ENCODE measurements at regions of chr12 and their contacts with region 1.

Region 1: GRCh38 chr12:68317047-68317667 is 15.0 kb downstream of the MDM1 start:
- DNase-seq: peak in 2 of 5 donors; percentile 31 to 44
- ATAC-seq: no peak
- H3K4me3 ChIP-seq: no peak overlapping the region
- H3K27ac ChIP-seq: no peak overlapping the region
- H3K4me1 ChIP-seq: peaks cover 0 to 10% (median 0%) of the 10 kb centered on the region in 12 donors
- H3K27me3 ChIP-seq: no peaks in the 10 kb centered on the region
- CTCF ChIP-seq: peak; percentile 56 to 85 (median 72)
- POLR2A ChIP-seq: no peak

Region 2: DNA sequence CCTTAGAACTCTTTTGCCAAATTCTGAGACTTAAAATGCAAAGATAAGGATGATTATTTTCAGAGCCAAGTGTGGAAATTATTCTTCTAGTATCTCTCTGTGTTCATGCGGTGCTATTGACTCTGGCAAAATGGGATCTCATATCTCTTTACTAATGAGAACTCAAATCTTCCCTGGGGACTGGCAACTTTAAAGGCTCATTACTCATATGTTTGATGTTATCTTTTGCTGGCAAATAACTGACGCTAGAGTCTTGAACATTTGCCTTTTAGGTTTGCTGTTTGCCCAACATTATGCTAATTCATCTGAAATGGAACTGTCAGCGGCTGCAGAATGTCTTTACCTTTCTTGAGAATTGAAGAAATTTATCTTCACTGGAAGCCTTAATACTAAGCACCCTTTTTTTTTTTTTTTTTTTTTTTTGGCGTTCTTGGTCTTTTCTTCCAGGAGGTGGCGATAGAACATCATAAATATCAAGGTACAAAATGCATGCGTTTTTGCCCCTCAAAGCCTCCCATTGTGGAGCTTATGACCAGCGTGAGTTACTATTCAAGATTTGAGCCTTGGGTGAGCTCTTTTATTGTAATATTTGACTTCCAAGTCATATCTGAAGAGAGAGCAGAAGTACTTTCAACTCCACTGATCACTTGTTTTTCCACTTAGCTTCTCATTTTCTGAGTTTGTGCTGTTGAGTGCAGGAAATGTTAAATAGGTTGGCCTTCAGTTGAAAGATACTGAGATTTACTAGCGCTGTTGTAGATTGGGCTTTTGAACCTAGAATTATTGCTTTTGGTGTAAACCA is 961.4 kb before region 1 on chr12:
- intact Hi-C with region 1: loop called in 3 of 10 experiments (anchors 5 to 10 kb)
- DNase-seq: no peak
- ATAC-seq: peak in 3 of 4 donors; percentile 47 to 67 (median 60)
- H3K4me3 ChIP-seq: peak overlapping the region in 1 of 12 donors; percentile 3
- H3K27ac ChIP-seq: peak overlapping the region in 6 of 12 donors; percentile 16 to 52 (median 45)
- H3K4me1 ChIP-seq: peaks cover 0 to 58% (median 31%) of the 10 kb centered on the region in 12 donors
- H3K27me3 ChIP-seq: no peaks in the 10 kb centered on the region
- CTCF ChIP-seq: peak; percentile 41 to 75 (median 64)
- POLR2A ChIP-seq: no peak

Region 3: DNA sequence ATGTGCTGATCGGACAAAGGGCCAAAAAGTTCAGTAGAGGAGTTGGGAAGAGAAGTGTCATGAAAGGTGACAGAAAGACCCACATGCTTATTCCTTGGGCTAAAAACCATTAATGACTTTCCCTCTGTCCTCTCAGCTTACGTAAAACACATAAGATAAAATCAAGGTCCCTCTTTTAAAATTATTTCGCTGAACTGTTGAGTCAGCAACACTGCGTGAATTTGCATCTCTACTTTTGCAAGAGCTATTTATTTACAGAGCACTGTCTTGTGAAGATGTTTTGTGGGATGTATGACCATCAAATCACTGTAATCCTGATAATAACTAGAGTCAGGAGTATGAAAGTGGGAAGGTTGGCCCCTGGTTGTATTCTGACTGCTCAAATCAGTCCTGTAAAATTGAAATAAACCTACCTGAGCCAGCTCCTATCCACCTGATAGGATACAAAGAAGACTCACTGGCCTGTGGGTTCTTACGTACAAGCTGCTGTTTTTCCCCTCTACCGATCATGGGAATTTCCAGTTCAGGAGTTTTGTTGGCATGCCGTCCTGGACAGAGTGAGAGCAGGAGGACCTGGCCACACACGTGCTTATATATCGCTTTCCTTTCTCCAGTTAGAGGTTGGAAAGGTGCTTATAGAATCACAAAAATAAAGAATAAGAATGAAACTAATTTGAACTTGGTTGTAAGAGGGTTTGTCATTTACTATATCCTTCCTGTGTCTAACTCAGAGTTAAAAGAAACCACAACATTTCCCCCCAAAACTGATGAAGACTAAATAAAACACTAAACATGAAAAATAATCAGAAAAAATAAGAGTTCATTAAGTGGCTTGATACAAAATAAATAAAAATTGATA is 285.0 kb before region 1 on chr12:
- intact Hi-C with region 1: loop called in 1 of 10 experiments (anchors 10 kb)
- DNase-seq: no peak
- ATAC-seq: no peak
- H3K4me3 ChIP-seq: no peak overlapping the region
- H3K27ac ChIP-seq: no peak overlapping the region
- H3K4me1 ChIP-seq: no peaks in the 10 kb centered on the region
- H3K27me3 ChIP-seq: no peaks in the 10 kb centered on the region
- CTCF ChIP-seq: no peak
- POLR2A ChIP-seq: no peak

Region 4: GRCh38 chr12:68040450-68041075 is 276.6 kb before region 1 on chr12:
- intact Hi-C with region 1: loop called in 8 of 10 experiments (anchors 2 to 10 kb)
- DNase-seq: peak in 4 of 5 donors; percentile 20 to 51 (median 44)
- ATAC-seq: peak in 3 of 4 donors; percentile 68 to 91 (median 83)
- H3K4me3 ChIP-seq: no peak overlapping the region
- H3K27ac ChIP-seq: no peak overlapping the region
- H3K4me1 ChIP-seq: no peaks in the 10 kb centered on the region
- H3K27me3 ChIP-seq: no peaks in the 10 kb centered on the region
- CTCF ChIP-seq: peak; percentile 77 to 89 (median 84)
- POLR2A ChIP-seq: no peak

Region 5: DNA sequence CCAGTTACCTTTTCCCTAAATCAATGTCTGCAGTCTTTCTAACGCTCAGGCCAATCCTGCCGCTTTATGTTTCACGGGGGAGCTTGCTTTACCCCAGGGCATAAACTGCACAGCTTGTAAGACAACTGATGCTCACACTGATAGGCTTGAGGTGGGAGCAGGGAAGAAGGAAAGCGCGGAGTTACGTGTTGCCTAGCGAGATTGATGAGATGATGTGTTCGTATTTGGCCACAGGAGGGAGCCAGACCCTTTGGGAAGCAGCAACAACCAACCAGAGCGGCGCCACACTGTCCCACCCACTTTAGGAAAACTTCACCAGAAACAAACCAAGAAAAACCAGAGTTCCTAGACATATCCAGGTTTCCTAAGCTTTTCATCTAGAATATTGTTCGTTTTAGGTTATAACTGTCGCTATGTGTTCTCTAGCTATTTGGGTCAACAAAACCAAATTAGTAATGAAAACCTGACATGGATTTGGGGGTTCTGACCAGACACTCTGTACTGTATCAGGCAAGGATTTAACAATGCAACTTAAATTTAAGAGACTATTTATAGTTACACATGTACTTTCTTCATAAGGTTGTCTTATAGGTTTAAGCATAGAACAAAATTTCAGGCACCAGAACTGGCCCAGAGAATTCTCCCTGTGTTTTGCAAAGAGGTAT is 93.9 kb before region 1 on chr12:
- intact Hi-C with region 1: loop called (anchors 1 to 2 kb)
- DNase-seq: peak; percentile 71 to 87 (median 78)
- ATAC-seq: peak; percentile 95 to 99 (median 98)
- H3K4me3 ChIP-seq: peak overlapping the region in 1 of 12 donors; percentile 18
- H3K27ac ChIP-seq: no peak overlapping the region
- H3K4me1 ChIP-seq: peaks cover 0 to 9% (median 0%) of the 10 kb centered on the region in 12 donors
- H3K27me3 ChIP-seq: peaks cover 0 to 10% (median 0%) of the 10 kb centered on the region in 9 donors
- CTCF ChIP-seq: peak; percentile 77 to 93 (median 84)
- POLR2A ChIP-seq: no peak

Region 6: GRCh38 chr12:68236421-68237059 is 80.6 kb before region 1 on chr12:
- intact Hi-C with region 1: loop called in 2 of 10 experiments (anchors 5 kb)
- DNase-seq: no peak
- ATAC-seq: peak in 2 of 4 donors; percentile 60 to 68
- H3K4me3 ChIP-seq: peak overlapping the region in 10 of 12 donors; percentile 21 to 57 (median 44)
- H3K27ac ChIP-seq: peak overlapping the region in 9 of 12 donors; percentile 16 to 71 (median 35)
- H3K4me1 ChIP-seq: peaks cover 0 to 33% (median 12%) of the 10 kb centered on the region in 12 donors
- H3K27me3 ChIP-seq: no peaks in the 10 kb centered on the region
- CTCF ChIP-seq: peak in 1 of 12 donors; percentile 9
- POLR2A ChIP-seq: no peak

Region 7: DNA sequence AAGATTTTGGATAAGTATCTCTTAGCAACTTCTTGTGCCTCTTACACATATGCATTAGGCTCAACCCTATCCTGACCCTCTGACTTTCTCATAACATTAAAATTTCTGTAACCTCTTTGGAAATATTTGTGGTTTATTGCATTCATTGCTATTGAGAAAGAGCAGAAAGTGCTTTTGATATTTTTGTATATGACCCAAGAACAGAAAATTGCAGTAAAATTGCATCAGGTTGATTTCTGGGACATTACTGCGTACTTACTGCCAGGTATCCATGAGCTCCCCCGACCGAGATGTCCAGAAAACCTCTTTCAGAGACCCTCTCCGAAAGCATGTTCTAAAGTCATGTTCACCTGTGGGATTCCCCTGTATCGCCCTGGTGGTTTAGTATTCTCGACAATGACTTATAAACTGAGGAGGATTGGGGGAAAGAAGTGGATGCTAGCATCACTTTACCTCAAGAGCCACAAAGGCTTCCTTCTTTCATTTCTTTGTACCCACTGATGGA is 49.2 kb before region 1 on chr12:
- intact Hi-C with region 1: no loop called
- DNase-seq: no peak
- ATAC-seq: no peak
- H3K4me3 ChIP-seq: no peak overlapping the region
- H3K27ac ChIP-seq: no peak overlapping the region
- H3K4me1 ChIP-seq: no peaks in the 10 kb centered on the region
- H3K27me3 ChIP-seq: no peaks in the 10 kb centered on the region
- CTCF ChIP-seq: no peak
- POLR2A ChIP-seq: no peak

Region 8: DNA sequence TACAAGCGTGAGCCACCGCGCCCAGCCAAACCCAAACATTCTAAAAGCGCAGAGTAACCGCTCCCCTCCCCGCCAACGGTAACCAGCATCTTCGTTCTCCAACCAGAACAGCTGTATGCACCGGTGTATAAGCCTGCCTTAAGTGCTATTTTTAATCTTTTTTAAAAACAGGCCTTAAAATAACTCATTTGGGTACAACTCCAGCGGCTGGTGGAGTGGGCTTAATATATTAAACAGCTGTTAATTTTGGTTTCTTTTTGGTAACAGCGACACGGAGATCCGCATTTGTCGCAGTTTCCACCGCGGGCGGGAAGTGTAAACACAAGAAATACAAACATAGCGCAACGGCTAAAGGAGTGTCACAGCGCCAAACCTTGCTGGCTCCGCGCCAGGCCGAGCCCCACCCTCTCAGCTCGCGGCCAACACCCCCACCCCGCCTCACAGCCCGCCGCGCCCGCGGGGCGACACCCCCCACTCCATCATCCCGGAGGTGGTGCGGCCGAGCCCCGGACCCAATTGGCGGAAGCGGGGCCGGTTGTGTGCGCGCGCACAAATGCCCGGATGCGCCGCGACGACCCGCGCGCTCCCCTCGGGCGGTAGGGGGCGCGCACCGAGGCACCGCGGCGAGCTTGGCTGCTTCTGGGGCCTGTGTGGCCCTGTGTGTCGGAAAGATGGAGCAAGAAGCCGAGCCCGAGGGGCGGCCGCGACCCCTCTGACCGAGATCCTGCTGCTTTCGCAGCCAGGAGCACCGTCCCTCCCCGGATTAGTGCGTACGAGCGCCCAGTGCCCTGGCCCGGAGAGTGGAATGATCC is 490.6 kb after region 1 on chr12 and contains the start of gene MDM2:
- intact Hi-C with region 1: loop called in 1 of 10 experiments (anchors 10 kb)
- DNase-seq: peak; percentile 94 to 99 (median 96)
- ATAC-seq: peak; percentile 96 to 97 (median 96)
- H3K4me3 ChIP-seq: peak within 1 kb of the TSS; percentile 71 to 98 (median 87)
- H3K27ac ChIP-seq: peak within 1 kb of the TSS; percentile 92 to 100 (median 96)
- H3K4me1 ChIP-seq: peaks cover 0 to 47% (median 13%) of the 10 kb centered on the region in 12 donors
- H3K27me3 ChIP-seq: no peaks in the 10 kb centered on the region
- CTCF ChIP-seq: peak; percentile 76 to 97 (median 86)
- POLR2A ChIP-seq: peak in 1 of 2 donors; percentile 74
- total RNA-seq, gene MDM2: 41.0 to 78.8 (median 50.9) TPM